Ascending aorta (tissue), 2 donors: ENCODE measurements at regions of chr12 and their contacts with region 1.

Region 1: GRCh38 chr12:124992874-124993625 is 395 bp upstream of the BRI3BP start:
- DNase-seq: no peak
- H3K4me3 ChIP-seq: peak overlapping the region; percentile 83 to 84
- H3K27ac ChIP-seq: no peak overlapping the region
- H3K4me1 ChIP-seq: peaks cover 3 to 6% of the 10 kb centered on the region in 2 donors
- H3K27me3 ChIP-seq: no peaks in the 10 kb centered on the region
- CTCF ChIP-seq: no peak

Region 2: DNA sequence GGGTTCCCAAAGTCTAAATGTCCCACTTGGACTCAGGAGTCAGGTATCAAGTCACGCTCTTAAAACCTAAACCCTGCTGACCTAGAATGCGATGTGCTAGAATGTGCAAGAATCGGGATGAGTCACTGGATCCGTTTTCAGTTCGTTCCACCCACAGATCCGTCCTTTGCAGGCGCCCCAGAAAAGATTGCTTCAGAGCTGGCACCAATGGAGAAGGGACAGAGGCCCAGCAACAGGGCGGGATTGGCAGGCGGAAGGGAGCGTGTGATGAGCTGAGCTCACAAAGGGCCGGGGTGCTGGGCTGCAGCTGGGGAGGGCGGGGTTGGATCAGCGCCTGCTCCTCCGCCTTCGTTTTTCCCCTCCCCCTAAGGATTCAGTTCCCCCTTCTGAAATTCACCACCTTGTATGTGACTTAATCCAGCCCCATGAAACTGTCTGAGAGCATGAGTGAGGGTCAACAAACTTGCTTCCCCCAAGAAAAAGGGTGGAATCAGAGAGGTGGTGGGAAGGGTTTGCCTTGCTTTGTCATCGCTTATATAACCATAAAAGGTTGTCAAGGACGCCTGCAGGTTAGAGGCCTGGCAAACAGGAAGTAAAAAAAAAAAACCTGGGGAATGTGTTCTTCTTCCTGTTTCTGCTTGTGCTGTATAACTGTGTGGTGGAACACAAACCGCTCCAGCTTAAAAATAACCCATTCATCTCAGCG is 75.8 kb before region 1 on chr12:
- intact Hi-C with region 1: loop called (anchors 5 kb)
- DNase-seq: peak; percentile 96 to 99
- H3K4me3 ChIP-seq: peak overlapping the region; percentile 45 to 72
- H3K27ac ChIP-seq: peak overlapping the region; percentile 99 to 100
- H3K4me1 ChIP-seq: peaks cover 5 to 39% of the 10 kb centered on the region in 2 donors
- H3K27me3 ChIP-seq: no peaks in the 10 kb centered on the region
- CTCF ChIP-seq: no peak

Region 3: GRCh38 chr12:124940549-124941527 is 52.2 kb before region 1 on chr12:
- intact Hi-C with region 1: loop called (anchors 2 kb)
- DNase-seq: peak; percentile 75 to 92
- H3K4me3 ChIP-seq: peak overlapping the region; percentile 48 to 65
- H3K27ac ChIP-seq: peak overlapping the region; percentile 83 to 92
- H3K4me1 ChIP-seq: peaks cover 0 to 15% of the 10 kb centered on the region in 2 donors
- H3K27me3 ChIP-seq: no peaks in the 10 kb centered on the region
- CTCF ChIP-seq: peak; percentile 85 to 89 (median 88)

Region 4: GRCh38 chr12:125049093-125049458 is 56.0 kb after region 1 on chr12:
- intact Hi-C with region 1: loop called (anchors 5 kb)
- DNase-seq: no peak
- H3K4me3 ChIP-seq: peak overlapping the region; percentile 56 to 69
- H3K27ac ChIP-seq: no peak overlapping the region
- H3K4me1 ChIP-seq: no peaks in the 10 kb centered on the region
- H3K27me3 ChIP-seq: no peaks in the 10 kb centered on the region
- CTCF ChIP-seq: no peak

Region 5: DNA sequence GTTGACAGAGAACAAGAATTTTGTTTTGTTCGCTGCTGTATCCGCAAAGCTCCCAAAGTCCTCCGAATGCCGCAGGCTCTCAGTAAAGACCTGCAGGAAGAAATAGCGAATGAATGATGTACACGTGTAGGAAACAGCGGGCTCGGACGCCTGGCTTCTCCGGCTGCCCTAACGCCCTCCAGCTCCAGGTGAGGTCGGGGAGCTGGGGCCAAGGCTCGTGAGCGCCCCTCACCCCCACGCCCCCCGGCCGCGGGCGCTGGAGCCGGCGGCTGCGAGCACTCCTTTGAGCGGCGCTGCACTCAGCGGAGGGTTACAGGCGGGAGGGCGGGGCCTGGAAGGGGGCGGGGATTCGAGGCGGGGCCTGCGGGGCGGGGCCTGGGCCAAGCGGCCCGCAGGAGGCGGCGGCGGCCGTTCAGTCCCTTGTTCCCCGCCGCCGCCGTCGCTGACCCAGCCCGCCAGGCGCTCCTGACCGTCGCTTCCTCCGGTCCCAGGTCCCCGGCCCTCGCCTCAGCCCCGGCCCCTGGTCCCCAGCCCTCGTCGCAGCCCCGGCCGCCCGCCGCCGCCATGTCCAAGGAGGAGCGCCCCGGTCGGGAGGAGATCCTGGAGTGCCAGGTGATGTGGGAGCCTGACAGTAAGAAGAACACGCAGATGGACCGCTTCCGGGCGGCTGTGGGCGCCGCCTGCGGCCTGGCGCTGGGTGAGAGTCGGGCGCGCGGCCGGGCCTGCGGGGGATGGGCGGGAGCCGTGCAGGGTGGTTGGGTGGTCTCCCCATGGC is 72.2 kb after region 1 on chr12 and contains the start of gene AACS:
- intact Hi-C with region 1: loop called (anchors 5 kb)
- DNase-seq: peak in 1 of 2 donors; percentile 78
- H3K4me3 ChIP-seq: peak within 1 kb of the TSS; percentile 67 to 99
- H3K27ac ChIP-seq: peak within 1 kb of the TSS; percentile 54 to 83
- H3K4me1 ChIP-seq: peaks cover 4 to 11% of the 10 kb centered on the region in 2 donors
- H3K27me3 ChIP-seq: no peaks in the 10 kb centered on the region
- CTCF ChIP-seq: no peak
- total RNA-seq, gene AACS: 7.0 TPM